ENCODE measurements at regions of chr10 and their contacts with region 1.

Region 1: DNA sequence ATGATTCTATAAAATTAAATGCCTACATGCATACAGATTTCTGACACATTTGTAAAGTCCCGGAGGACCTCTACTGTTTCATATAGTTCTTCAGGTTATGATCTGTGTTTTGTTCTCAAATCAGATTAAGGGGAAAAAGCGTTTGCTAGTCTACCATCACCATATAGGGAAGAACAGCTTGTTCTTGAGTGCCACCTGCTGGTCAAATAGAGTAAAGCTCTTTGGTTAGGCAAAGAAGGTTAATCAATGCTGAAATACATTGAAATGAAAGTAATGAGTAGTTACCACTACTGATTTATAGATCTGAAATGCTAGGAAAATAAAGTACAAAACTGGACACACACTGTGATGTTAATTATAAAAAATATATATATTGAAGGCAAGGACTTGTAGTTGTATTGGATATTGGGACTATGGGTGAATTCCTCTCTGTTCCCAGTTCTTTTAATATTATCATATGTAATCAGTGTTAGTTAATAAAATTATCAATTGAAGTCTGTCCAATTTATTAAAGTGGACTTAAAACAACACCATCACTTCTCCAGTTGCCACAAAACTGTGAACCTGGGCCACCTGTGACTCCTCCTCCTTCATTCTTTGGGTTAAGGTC is 72.6 kb upstream of the PDLIM1 start:
- DNase-seq: no peak
- H3K4me3 ChIP-seq: no peak overlapping the region
- H3K27ac ChIP-seq: no peak overlapping the region
- H3K27me3 ChIP-seq: peaks cover 5% of the 10 kb centered on the region
- CTCF ChIP-seq: peak; percentile 88

Region 2: DNA sequence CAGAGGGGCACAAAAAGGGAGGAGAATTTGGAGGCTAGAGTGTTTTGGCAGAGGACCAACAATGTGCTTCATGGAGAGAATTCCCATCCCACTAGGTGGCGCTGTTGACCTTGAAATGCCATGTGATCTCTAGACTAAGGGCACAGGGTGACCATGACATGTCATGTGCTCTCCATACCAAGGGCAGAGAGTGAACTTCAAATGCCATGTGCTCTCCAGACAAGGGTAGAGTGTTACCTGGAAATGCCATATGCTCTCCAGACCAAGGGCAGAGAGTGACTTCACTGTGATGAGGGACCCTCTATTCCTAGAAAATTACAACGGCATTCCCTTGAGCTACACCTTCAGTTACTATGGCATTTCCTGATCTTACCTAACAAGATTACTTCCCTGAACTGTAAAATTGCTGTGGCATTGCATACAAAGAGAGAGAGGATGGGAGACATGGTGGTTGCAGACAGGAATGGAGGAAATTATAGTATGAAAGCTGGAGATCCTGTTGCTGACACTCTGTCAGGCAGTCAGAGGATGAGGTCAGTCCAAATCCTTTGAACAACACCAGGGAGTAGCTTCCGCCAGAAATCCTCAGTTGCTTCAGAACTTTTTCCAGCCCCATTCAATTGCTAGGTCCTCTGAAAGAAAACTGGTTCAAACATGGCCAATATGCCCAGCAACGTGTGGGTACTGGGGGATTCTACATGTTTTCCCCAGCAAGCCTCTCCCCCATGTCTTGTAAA is 230.2 kb before region 1 on chr10:
- CTCF ChIA-PET with region 1: interaction called, 12 read pairs
- POLR2A ChIA-PET with region 1: no interaction called
- DNase-seq: peak; percentile 39
- H3K4me3 ChIP-seq: no peak overlapping the region
- H3K27ac ChIP-seq: no peak overlapping the region
- H3K27me3 ChIP-seq: peaks cover 3% of the 10 kb centered on the region
- CTCF ChIP-seq: peak; percentile 78

Region 3: GRCh38 chr10:95201736-95202135 is 161.7 kb before region 1 on chr10:
- CTCF ChIA-PET with region 1: interaction called, 67 read pairs
- POLR2A ChIA-PET with region 1: no interaction called
- DNase-seq: no peak
- H3K4me3 ChIP-seq: no peak overlapping the region
- H3K27ac ChIP-seq: no peak overlapping the region
- H3K27me3 ChIP-seq: no peaks in the 10 kb centered on the region
- CTCF ChIP-seq: peak; percentile 55

Region 4: DNA sequence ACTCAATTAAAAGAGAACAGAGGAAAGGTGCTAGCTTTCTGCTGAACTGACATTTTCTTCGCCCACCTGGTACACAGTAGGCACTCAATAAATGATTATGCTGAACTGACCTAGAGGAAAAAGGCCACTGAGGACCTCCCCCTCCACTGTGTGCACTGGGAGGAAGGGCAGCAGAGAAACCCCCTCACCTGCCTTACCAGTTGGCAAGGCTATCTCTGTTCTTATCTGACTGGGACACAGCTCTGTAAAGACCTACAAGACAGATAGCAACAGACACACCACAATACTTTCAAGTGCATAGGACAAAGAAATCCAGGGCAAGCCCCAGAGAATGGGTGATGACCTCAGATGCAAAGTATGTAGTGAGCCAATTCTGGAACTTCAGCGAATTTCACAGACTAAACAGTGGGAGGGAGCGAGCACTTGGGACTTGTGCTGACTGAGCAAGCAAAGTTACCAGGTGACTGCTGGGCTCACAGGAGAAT is 103.0 kb before region 1 on chr10:
- CTCF ChIA-PET with region 1: interaction called, 14 read pairs
- POLR2A ChIA-PET with region 1: no interaction called
- DNase-seq: no peak
- H3K4me3 ChIP-seq: no peak overlapping the region
- H3K27ac ChIP-seq: peak overlapping the region; percentile 85
- H3K27me3 ChIP-seq: no peaks in the 10 kb centered on the region
- CTCF ChIP-seq: no peak

Region 5: DNA sequence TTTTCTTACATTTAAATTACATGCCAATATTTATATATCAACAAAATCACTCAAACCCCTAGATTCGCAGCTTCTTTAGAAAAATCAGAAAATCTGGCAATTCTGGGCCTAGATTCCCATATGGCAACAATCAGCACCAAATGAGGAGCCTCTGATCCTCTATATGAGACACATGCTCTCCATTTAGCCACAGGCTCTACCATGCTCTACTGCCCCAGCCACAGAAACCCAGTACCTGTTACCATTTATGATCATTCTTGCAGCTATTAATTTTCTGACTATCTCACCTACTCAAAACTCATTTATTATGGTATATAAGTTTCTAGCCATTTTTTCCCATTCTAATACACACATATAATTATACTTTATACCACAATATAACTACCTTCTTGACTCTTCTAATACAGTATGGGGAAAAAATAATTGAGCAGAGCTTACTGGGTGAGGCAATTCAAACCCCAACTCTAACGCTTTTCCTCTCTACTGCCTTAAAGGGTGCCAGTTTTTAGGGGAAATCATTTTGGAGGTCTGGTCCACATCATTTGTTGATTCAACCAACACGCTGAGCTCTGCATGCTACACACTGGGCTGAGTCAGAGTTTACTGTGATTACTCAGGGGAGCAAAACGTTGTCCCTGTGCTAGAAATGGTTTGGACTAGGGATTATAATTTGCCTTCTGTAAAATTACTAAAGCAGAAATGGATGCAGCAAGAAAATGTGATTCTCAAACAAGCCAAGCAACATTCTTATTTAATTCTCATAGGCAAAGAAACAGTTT is 84.2 kb before region 1 on chr10:
- CTCF ChIA-PET with region 1: interaction called, 27 read pairs
- POLR2A ChIA-PET with region 1: interaction called, 7 read pairs
- DNase-seq: no peak
- H3K4me3 ChIP-seq: no peak overlapping the region
- H3K27ac ChIP-seq: peak overlapping the region; percentile 77
- H3K27me3 ChIP-seq: no peaks in the 10 kb centered on the region
- CTCF ChIP-seq: no peak

Region 6: DNA sequence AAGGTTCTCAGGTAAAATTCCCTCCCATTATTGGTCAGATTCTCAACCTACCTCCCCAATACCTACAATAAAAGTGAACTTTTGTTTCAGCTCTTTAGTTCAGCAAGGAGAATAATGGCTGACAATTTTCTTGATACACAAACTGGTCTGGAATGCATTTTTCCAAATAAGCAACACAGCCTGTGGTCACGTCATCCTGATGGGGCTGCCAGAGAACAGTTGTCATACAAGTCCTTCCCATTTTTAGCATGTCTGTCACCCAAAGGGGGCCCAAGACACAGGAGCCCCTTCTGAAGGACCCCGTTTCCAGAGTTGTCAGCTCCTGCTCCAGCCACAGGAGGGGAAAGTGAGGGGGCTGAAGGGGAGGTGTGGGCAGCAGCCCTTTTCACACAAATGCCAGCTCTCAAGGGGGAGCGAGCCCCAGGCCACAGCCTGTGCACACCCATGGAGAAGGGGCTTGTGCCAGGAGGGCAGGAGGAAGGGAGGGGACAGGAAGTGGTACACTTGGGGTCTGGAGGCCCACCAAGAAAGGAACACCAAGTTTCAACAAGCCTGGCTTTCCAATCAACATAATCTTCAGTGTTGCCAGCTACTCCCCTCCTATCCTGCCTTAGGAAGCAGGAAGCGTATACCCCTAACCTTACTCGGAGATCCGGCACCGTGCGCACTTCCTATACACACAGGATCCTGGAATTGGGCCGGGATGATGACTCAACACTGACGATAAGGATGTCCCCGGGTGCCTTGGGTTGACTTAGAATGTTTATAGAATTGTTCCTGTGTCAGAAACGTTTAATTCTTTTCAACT is 29.2 kb before region 1 on chr10:
- CTCF ChIA-PET with region 1: interaction called, 10 read pairs
- POLR2A ChIA-PET with region 1: no interaction called
- DNase-seq: peak; percentile 66
- H3K4me3 ChIP-seq: no peak overlapping the region
- H3K27ac ChIP-seq: peak overlapping the region; percentile 97
- H3K27me3 ChIP-seq: no peaks in the 10 kb centered on the region
- CTCF ChIP-seq: no peak

Region 7: DNA sequence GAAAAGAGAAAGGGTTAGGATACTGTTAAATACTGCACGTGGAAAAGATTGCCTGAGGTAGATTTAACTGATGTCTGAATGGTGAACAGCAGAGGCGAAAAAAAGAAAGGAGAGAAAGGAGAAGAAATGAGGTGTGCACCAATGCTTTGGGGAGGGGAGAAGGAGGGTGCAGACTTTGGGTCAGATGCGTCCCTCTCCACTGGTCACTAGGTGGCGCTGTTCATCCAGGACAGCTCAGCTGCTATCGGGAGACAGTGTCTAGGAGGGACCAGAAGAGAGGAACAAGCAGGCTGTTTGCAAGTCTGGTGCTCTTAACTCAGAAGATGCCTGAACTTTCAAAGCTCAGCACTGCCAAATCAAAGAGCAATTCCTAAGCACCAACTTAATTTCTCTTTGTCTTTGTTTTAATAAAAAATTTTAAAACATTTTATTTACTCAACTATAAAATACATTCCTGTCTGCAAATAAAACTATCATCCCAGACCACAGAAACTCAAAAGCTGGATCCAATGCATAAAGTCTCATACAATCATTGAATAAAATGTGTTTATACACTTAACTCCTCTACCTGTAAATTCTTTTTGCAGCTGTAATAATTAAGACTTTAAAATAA is 11.3 kb after region 1 on chr10:
- CTCF ChIA-PET with region 1: interaction called, 83 read pairs
- POLR2A ChIA-PET with region 1: no interaction called
- DNase-seq: peak; percentile 10
- H3K4me3 ChIP-seq: no peak overlapping the region
- H3K27ac ChIP-seq: no peak overlapping the region
- H3K27me3 ChIP-seq: peaks cover 21% of the 10 kb centered on the region
- CTCF ChIP-seq: peak; percentile 70

Region 8: GRCh38 chr10:95485445-95485844 is 122.0 kb after region 1 on chr10:
- CTCF ChIA-PET with region 1: no interaction called
- POLR2A ChIA-PET with region 1: no interaction called
- DNase-seq: no peak
- H3K4me3 ChIP-seq: no peak overlapping the region
- H3K27ac ChIP-seq: no peak overlapping the region
- H3K27me3 ChIP-seq: no peaks in the 10 kb centered on the region
- CTCF ChIP-seq: no peak